ENCODE measurements at regions of chr2 and their contacts with region 1.

Region 1: GRCh38 chr2:27086090-27086723 is 365 bp upstream of the KHK start:
- ATAC-seq: peak; percentile 78 to 89 (median 82)
- H3K4me3 ChIP-seq: peak overlapping the region; percentile 45 to 51 (median 46)
- H3K27ac ChIP-seq: peak overlapping the region; percentile 74 to 85
- H3K4me1 ChIP-seq: peaks cover 19% of the 10 kb centered on the region in 2 donors

Region 2: DNA sequence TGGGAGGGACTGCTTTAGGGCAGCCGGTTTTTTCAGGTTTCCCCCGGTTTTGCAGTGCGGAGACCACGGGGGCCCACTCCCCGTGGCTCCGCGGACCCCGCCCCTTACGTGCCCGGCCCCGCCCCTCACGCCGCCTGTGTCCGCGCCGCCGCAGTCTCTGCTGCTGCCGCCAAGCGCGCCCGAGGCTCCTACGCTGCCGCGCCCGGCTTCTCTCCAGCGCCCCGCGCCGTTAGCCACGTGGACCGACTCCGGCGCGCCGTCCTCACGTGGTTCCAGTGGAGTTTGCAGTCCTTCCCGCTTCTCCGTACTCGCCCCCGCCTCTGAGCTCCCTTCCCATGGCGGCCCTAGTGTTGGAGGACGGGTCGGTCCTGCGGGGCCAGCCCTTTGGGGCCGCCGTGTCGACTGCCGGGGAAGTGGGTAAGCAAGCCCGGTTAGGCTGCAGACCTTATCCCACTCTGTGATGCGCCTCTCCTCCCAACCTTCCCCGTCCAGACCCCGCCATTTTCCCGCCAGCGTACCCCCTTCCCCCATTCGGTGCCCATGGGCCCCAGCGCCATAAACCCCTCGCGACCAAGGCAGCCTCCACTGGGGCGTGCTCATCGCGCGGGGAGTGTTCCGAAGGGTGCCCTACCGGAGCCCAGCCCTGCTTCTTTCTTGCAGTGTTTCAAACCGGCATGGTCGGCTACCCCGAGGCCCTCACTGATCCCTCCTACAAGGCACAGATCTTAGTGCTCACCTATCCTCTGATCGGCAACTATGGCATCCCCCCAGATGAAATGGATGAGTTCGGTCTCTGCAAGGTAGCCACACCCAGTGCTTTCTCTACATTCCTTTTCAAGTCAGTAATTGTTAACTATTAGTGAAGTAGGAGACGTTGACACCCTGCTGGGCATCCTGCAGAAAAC is 131.3 kb after region 1 on chr2 and contains the start of gene CAD:
- in situ Hi-C with region 1: loop called in 1 of 9 experiments (anchors 25 kb)
- ATAC-seq: peak; percentile 82 to 94 (median 90)
- H3K4me3 ChIP-seq: peak within 1 kb of the TSS; percentile 56 to 84 (median 58)
- H3K27ac ChIP-seq: peak within 1 kb of the TSS; percentile 74 to 87
- H3K4me1 ChIP-seq: peaks cover 18 to 26% of the 10 kb centered on the region in 2 donors
- total RNA-seq, gene CAD: 20.5 to 72.3 (median 31.5) TPM

Region 3: GRCh38 chr2:27303093-27304025 is 217.2 kb after region 1 on chr2:
- in situ Hi-C with region 1: no loop called
- ATAC-seq: peak; percentile 19 to 75 (median 39)
- H3K4me3 ChIP-seq: no peak overlapping the region
- H3K27ac ChIP-seq: no peak overlapping the region
- H3K4me1 ChIP-seq: peaks cover 11 to 16% of the 10 kb centered on the region in 2 donors